A549 (cell line): ENCODE measurements at regions of chr9 and their contacts with region 1.

Region 1: GRCh38 chr9:134443168-134444037 is 117.1 kb downstream of the RXRA start:
- DNase-seq: peak; percentile 92 to 98
- ATAC-seq: peak; percentile 91
- H3K4me3 ChIP-seq: no peak overlapping the region
- H3K27ac ChIP-seq: peak overlapping the region; percentile 72 to 82
- H3K4me1 ChIP-seq: peaks cover 13% of the 10 kb centered on the region
- CTCF ChIP-seq: peak; percentile 96
- EP300 ChIP-seq: no peak
- POLR2A ChIP-seq: no peak
- RAD21 ChIP-seq: peak; percentile 98 to 100

Region 2: DNA sequence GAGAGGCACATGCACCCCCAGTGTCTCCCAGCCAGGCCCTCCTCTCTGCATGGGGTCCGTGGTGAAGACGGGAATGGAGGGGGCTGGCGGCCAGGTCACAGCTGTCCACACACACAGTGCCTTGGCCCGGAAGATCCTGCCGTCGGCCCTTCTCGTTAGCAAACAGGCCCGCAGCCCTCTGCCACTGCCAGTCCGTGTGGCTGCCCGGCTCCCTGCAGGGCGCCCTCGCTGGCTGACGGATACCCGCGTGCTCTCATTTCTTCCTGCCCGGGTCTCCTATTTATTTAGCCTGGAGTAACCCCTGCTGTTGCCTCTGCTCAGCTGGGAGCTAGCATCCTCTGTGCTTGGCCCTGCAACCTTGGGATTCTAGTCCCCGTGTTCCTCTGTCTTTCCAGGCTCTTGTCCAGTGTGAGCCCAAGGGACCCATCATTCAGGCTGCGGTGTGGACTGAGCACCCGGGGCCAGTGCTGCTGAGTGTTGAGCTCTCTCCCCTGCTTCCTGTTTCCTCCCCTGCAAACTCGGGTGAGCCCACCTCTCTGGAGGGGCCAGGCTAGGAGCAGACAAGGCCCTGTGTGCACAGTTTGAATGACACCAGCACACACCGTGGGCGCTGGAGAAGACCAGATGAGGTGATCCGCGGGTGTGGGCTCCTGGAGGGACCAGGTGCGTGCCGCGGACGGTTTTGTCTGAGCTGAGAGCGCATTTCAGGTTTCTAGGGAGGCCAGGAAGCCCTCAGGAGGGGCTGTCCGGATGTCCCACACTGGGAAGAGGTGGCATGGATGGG is 264.4 kb before region 1 on chr9:
- CTCF ChIA-PET with region 1: interaction called, 63 read pairs
- POLR2A ChIA-PET with region 1: no interaction called
- DNase-seq: peak in 1 of 2 experiments; percentile 22
- ATAC-seq: peak; percentile 6 to 19; a peak in 3 of 6 replicates
- H3K4me3 ChIP-seq: no peak overlapping the region
- H3K27ac ChIP-seq: peak overlapping the region in 1 of 2 experiments; percentile 62; a peak in 3 of 6 replicates
- H3K4me1 ChIP-seq: peaks cover 15% of the 10 kb centered on the region
- CTCF ChIP-seq: no peak
- EP300 ChIP-seq: no peak
- POLR2A ChIP-seq: no peak
- RAD21 ChIP-seq: no peak

Region 3: GRCh38 chr9:134325817-134326723 is 117.3 kb before region 1 on chr9 and contains the start of gene RXRA:
- CTCF ChIA-PET with region 1: interaction called, 21 read pairs
- POLR2A ChIA-PET with region 1: interaction called, 5 read pairs
- DNase-seq: peak; percentile 78 to 85
- ATAC-seq: peak; percentile 63 to 64
- H3K4me3 ChIP-seq: peak within 1 kb of the TSS; percentile 93
- H3K27ac ChIP-seq: peak within 1 kb of the TSS; percentile 97 to 99
- H3K4me1 ChIP-seq: peaks cover 47% of the 10 kb centered on the region
- CTCF ChIP-seq: no peak; the same call in 2 of the 3 replicates
- EP300 ChIP-seq: no peak
- POLR2A ChIP-seq: peak; percentile 70
- RAD21 ChIP-seq: no peak; a peak in 1 of 5 replicates
- polyA plus RNA-seq, gene RXRA: 6.6 and 10.2 TPM in 2 replicates

Region 4: GRCh38 chr9:134399435-134400056 is 43.9 kb before region 1 on chr9:
- CTCF ChIA-PET with region 1: interaction called, 13 read pairs
- POLR2A ChIA-PET with region 1: no interaction called
- DNase-seq: peak in 1 of 2 experiments; percentile 76
- ATAC-seq: 0 out of 6 replicates have a peak, but pooled peaks of 1 of the 2 experiments have one; percentile 11
- H3K4me3 ChIP-seq: no peak overlapping the region
- H3K27ac ChIP-seq: no peak overlapping the region
- H3K4me1 ChIP-seq: peaks cover 14% of the 10 kb centered on the region; the same call in 2 of the 3 replicates
- CTCF ChIP-seq: peak; percentile 36
- EP300 ChIP-seq: no peak
- POLR2A ChIP-seq: no peak
- RAD21 ChIP-seq: no peak; a peak in 1 of 5 replicates

Region 5: GRCh38 chr9:134418988-134419683 is 24.3 kb before region 1 on chr9:
- CTCF ChIA-PET with region 1: interaction called, 20 read pairs
- POLR2A ChIA-PET with region 1: no interaction called
- DNase-seq: no peak
- ATAC-seq: peak; percentile 9 to 30; a peak in 4 of 6 replicates
- H3K4me3 ChIP-seq: no peak overlapping the region
- H3K27ac ChIP-seq: peak overlapping the region in 1 of 2 experiments; percentile 57; a peak in 2 of 6 replicates
- H3K4me1 ChIP-seq: peaks cover 23% of the 10 kb centered on the region
- CTCF ChIP-seq: no peak
- EP300 ChIP-seq: no peak
- POLR2A ChIP-seq: no peak
- RAD21 ChIP-seq: no peak

Region 6: DNA sequence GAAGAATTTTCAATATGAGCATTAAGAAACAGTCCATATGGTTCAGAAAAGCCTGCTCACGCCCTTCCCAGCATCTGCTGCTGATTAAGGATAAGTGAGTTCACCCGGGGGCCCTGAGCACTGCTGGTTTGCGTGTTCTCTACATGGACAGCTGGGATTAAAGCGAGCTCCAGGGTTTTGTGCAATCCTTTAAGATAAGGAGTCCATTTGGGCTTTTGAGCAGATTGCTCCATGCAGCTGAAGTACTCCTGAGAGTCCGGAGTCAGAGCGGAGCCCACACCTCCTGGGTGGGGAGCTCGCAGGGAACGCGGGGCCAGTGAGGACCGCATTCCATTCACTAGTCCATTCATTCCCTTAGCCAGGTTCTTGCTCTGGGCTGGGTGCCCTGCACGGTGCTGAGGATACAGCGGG is 48.9 kb after region 1 on chr9:
- CTCF ChIA-PET with region 1: no interaction called
- POLR2A ChIA-PET with region 1: no interaction called
- DNase-seq: no peak
- ATAC-seq: no peak
- H3K4me3 ChIP-seq: no peak overlapping the region
- H3K27ac ChIP-seq: no peak overlapping the region; a peak in 1 of 6 replicates
- H3K4me1 ChIP-seq: no peaks in the 10 kb centered on the region
- CTCF ChIP-seq: no peak
- EP300 ChIP-seq: no peak
- POLR2A ChIP-seq: no peak
- RAD21 ChIP-seq: no peak

Region 7: GRCh38 chr9:134660407-134660806 is 217.0 kb after region 1 on chr9:
- CTCF ChIA-PET with region 1: interaction called, 45 read pairs
- POLR2A ChIA-PET with region 1: no interaction called
- DNase-seq: peak in 1 of 2 experiments; percentile 67
- ATAC-seq: no peak
- H3K4me3 ChIP-seq: no peak overlapping the region
- H3K27ac ChIP-seq: no peak overlapping the region
- H3K4me1 ChIP-seq: peaks cover 17% of the 10 kb centered on the region; the same call in 2 of the 3 replicates
- CTCF ChIP-seq: peak; percentile 20; the same call in 1 of the 3 replicates
- EP300 ChIP-seq: no peak
- POLR2A ChIP-seq: no peak
- RAD21 ChIP-seq: no peak